ENCODE measurements at regions of chr1 and their contacts with region 1.

Region 1: GRCh38 chr1:9424261-9424660 is 115.0 kb upstream of the SLC25A33 start:
- DNase-seq: no peak
- ATAC-seq: no peak
- H3K4me3 ChIP-seq: no peak overlapping the region
- H3K27ac ChIP-seq: peak overlapping the region; percentile 64
- H3K4me1 ChIP-seq: peaks cover 10% of the 10 kb centered on the region
- H3K27me3 ChIP-seq: no peaks in the 10 kb centered on the region
- CTCF ChIP-seq: no peak

Region 2: GRCh38 chr1:9588551-9589143 is 164.4 kb after region 1 on chr1 and contains the start of gene TMEM201:
- CTCF ChIA-PET with region 1: no interaction called
- POLR2A ChIA-PET with region 1: interaction called, 14 read pairs
- in situ Hi-C with region 1: no loop called
- intact Hi-C with region 1: no loop called
- DNase-seq: peak; percentile 20
- ATAC-seq: peak; percentile 92
- H3K4me3 ChIP-seq: peak within 1 kb of the TSS; percentile 64 to 77
- H3K27ac ChIP-seq: peak within 1 kb of the TSS; percentile 73
- H3K4me1 ChIP-seq: peaks cover 3% of the 10 kb centered on the region; the same call in 1 of the 2 replicates
- H3K27me3 ChIP-seq: no peaks in the 10 kb centered on the region
- CTCF ChIP-seq: peak; percentile 98
- total RNA-seq, gene TMEM201: 26.5 TPM